Right cardiac atrium (tissue), 5 donors: ENCODE measurements at regions of chr1 and their contacts with region 1.

Region 1: DNA sequence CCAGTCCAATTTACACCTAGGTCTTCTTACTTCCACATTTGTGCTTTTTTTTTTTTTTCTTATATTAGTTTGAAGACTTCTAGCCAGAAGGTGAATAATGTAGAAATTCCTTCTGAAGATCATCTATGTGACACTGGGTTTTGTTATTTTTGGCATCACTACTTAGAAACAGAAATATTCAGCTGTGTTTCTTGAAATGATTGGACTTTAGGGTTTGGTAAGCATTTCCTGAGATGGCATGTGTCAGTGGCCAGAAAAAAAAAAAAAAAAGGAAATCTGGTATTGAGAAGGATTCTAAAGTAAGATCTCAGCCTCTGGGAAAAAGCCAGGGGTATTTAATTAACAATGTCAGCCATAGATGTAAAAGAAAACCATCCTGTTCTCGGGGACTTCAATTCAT is 43.4 kb upstream of the LRRC8C start:
- DNase-seq: no peak
- ATAC-seq: no peak
- H3K4me3 ChIP-seq: no peak overlapping the region
- H3K27ac ChIP-seq: no peak overlapping the region
- H3K4me1 ChIP-seq: no peaks in the 10 kb centered on the region
- H3K27me3 ChIP-seq: no peaks in the 10 kb centered on the region

Region 2: DNA sequence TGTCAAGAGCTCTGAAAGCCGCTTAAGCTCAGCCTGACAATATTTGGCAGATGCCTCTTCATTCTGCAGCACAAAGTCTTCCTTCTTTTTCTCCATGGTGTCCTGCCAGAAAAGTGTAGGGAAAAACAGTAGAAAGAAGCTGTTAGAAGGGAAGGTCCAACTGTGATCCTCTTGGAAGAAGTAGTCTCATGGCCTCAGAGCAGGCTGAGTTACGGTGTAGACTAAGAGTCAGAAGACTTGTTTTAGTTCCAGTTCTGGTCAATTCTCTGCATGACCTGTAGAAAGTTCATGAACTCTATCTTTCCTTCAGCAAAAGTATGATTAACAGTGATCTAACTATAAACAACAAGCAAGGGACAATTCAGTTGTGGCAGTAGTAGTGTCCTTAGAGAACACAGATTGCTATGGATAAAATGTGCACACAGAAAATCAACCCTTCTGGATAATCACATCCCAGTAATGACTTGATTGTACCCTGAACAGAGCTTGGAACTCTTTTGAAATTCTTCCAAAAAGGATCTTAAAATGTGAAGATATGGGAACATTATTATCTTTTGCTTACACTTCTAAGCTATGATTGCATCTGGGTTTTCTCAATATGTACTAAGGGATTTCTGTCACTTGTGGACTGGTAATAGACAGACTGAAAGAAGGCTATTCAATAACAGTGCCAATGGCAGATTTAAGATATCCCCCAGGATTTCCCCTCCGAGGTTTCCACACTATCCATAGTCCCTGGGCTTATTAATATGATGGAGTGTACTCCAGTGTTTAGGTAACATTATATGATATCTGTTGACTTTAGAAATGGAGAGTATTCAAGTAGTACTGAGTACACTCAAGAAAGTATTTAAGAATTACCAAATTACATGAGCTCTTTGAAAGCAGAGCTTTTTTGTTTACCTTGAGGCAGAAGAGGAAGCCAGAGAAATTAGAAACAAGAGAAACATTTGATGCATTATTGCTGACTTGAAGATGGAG is 441.5 kb before region 1 on chr1:
- intact Hi-C with region 1: no loop called
- DNase-seq: no peak
- ATAC-seq: peak in 1 of 2 donors; percentile 38
- H3K4me3 ChIP-seq: no peak overlapping the region
- H3K27ac ChIP-seq: no peak overlapping the region
- H3K4me1 ChIP-seq: no peaks in the 10 kb centered on the region
- H3K27me3 ChIP-seq: no peaks in the 10 kb centered on the region

Region 3: GRCh38 chr1:89524369-89525168 is 64.9 kb before region 1 on chr1 and contains the start of gene LRRC8B:
- intact Hi-C with region 1: loop called in 1 of 4 experiments (anchors 10 kb)
- DNase-seq: peak; percentile 93 to 97 (median 97)
- ATAC-seq: peak; percentile 99 to 100
- H3K4me3 ChIP-seq: peak within 1 kb of the TSS; percentile 86
- H3K27ac ChIP-seq: peak within 1 kb of the TSS; percentile 63
- H3K4me1 ChIP-seq: peaks cover 3% of the 10 kb centered on the region
- H3K27me3 ChIP-seq: no peaks in the 10 kb centered on the region
- total RNA-seq, gene LRRC8B: 3.4 to 5.6 (median 5.2) TPM

Region 4: GRCh38 chr1:89538361-89538760 is 51.2 kb before region 1 on chr1:
- intact Hi-C with region 1: loop called in 1 of 4 experiments (anchors 10 kb)
- DNase-seq: no peak
- ATAC-seq: peak; percentile 64 to 86
- H3K4me3 ChIP-seq: no peak overlapping the region
- H3K27ac ChIP-seq: no peak overlapping the region
- H3K4me1 ChIP-seq: peaks cover 5% of the 10 kb centered on the region
- H3K27me3 ChIP-seq: no peaks in the 10 kb centered on the region

Region 5: DNA sequence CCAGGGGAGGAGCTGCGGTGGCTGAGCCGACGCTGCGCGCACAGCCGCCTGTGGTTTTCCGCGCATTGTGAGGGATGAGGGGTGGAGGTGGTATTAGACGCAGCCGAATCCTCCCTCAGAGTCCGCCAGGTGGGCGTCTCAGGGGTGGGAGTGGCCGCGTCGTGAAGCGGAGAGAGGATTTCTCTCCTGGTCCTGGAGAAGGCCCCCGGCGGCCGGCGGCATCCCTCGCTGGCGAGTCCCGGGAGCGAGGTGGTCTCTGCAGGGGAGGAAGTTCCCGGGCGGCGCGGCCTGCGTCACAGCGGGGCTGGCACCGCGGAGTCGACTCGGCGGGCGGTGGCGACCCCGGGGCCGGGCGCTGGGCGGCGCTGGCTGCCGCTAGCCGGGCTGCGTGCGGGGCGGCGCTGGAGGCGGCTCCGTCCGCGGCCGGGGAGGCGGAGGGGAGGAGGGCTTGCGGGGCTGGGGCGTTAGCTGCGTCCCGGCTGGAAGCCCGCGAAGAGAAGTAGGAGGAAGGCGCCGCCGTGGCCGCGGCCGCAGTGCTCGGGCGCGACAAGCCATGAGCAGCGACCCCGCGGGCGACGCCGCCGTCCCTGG is 43.2 kb after region 1 on chr1 and contains the start of gene LRRC8C:
- intact Hi-C with region 1: no loop called
- DNase-seq: peak; percentile 89 to 96 (median 95)
- ATAC-seq: peak; percentile 95 to 96
- H3K4me3 ChIP-seq: peak within 1 kb of the TSS; percentile 56
- H3K27ac ChIP-seq: peak within 1 kb of the TSS; percentile 95
- H3K4me1 ChIP-seq: no peaks in the 10 kb centered on the region
- H3K27me3 ChIP-seq: no peaks in the 10 kb centered on the region
- total RNA-seq, gene LRRC8C: 5.9 to 10.6 (median 6.9) TPM

Region 6: DNA sequence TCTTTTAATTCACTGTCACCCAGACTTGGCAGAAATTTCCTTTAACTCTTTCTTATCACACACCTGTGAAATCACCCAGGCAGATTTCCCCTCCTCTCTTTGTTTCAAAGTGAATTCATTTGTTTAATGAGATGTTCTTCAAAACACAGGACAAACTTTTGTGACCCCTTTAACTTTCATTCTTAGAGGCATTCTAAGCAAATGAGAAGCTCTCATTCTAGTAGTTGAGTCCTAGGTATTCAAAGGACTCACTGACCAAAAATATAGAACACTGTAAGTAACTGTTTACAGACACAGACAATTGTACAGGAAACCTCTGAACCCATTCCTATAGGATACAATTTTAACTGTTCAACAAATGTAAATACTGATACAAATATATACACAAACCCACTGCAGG is 60.3 kb after region 1 on chr1:
- intact Hi-C with region 1: no loop called
- DNase-seq: no peak
- ATAC-seq: no peak
- H3K4me3 ChIP-seq: no peak overlapping the region
- H3K27ac ChIP-seq: no peak overlapping the region
- H3K4me1 ChIP-seq: no peaks in the 10 kb centered on the region
- H3K27me3 ChIP-seq: no peaks in the 10 kb centered on the region